ENCODE measurements at regions of chr12 and their contacts with region 1.

Region 1: DNA sequence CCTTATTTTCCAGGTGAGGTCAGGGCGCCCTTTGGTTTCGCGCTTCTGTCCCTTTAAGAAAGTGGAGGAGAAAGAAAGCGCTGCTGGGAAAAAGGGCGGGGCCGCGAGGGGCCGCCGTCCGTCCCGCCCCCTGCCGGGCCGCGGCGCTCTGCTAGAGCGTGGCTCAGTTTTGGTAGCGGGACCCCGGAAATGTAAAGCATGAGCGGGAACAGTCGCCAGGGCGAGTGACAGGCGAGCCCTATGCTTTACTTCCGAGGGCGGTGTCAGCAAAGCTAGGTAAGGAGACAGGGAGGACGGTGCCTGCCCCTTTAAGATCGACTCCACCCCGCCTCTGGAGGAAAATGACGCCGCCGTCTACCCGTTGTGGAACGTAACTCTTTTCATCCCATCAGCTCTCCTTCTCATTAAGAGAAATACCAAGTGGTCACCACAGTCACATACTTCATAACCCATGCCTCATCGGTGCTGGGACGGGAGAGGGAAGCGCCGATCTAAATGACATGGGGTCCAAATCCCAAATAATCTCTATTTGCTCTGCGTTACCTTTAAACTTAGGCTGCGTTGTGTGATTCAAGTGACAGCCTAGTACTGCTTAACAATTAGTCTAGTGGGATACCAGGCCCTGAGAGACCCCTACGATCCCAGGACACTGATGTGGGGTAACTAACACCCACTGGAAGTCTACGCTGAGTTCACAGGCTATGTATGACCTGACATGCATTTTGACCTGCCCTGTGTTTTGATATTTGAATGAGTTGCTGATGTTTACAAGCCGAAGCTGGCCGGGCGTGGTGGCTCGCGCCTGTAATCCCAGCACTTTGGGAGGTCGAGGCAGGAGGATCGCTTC is at the start of gene ETFBKMT:
- DNase-seq: peak; percentile 68 to 94 (median 90)
- H3K4me3 ChIP-seq: peak within 1 kb of the TSS; percentile 59 to 97 (median 81)
- H3K27ac ChIP-seq: peak within 1 kb of the TSS; percentile 84 to 99 (median 96)
- H3K27me3 ChIP-seq: no peaks in the 10 kb centered on the region
- CTCF ChIP-seq: peak; percentile 29 to 89 (median 72)
- total RNA-seq, gene ETFBKMT: 1.6 to 8.4 (median 4.6) TPM

Region 2: GRCh38 chr12:31325877-31326631 is 333.3 kb before region 1 on chr12 and contains the start of gene SINHCAF:
- intact Hi-C with region 1: loop called in 1 of 2 experiments (anchors 10 kb)
- DNase-seq: peak; percentile 95 to 99 (median 98)
- H3K4me3 ChIP-seq: peak within 1 kb of the TSS; percentile 34 to 89 (median 73)
- H3K27ac ChIP-seq: peak within 1 kb of the TSS in 53 of 59 donors; percentile 18 to 86 (median 68)
- H3K27me3 ChIP-seq: peaks cover 0 to 34% (median 9%) of the 10 kb centered on the region in 45 donors
- CTCF ChIP-seq: peak in 20 of 56 donors; percentile 9 to 56 (median 28)
- total RNA-seq, gene SINHCAF: 0.70 to 9.0 (median 3.2) TPM

Region 3: DNA sequence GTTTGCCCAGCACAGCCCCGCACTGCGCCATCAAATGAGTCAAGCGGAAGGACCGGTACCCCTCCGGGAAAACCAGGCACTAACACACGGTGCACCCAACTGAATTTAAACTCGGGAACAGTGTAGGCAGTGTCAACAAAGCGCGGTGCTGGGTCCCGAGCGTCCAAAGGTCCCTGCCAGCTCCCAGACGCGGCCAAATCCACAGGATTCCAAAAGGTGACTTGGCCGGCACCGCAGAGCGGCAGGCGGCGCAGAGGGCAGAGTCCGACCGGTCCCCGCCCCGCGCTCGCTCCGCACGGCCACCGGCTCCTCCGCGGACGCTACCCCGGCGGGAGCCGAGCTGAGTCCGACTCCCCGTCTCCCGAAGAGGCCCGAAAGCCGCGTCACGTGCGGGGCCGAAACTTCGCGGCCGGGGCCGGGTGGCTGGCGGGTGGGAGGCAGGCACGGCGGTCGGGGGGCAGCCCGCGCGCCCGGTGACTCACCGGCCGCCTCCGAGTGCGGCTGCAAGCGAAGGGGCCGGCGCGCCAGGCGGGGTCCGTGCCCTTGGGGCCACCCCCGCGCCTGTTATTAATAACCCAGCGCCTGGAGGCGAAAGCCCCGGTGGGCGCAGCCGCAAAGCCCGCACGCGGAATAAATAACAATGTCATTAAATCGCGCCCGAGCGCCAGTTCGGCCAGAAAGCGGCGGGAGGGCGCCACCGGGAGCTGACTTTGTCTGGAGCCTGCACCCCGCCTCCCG is 69.2 kb before region 1 on chr12:
- intact Hi-C with region 1: no loop called
- DNase-seq: peak; percentile 50 to 77 (median 65)
- H3K4me3 ChIP-seq: peak overlapping the region; percentile 63 to 96 (median 87)
- H3K27ac ChIP-seq: peak overlapping the region; percentile 85 to 98 (median 96)
- H3K27me3 ChIP-seq: no peaks in the 10 kb centered on the region
- CTCF ChIP-seq: peak in 21 of 56 donors; percentile 3 to 50 (median 16)

Region 4: GRCh38 chr12:31728917-31729640 is 69.8 kb after region 1 on chr12 and contains the start of gene AMN1:
- intact Hi-C with region 1: loop called (anchors 1 to 2 kb)
- DNase-seq: peak; percentile 98 to 99 (median 99)
- H3K4me3 ChIP-seq: peak within 1 kb of the TSS; percentile 65 to 97 (median 80)
- H3K27ac ChIP-seq: peak within 1 kb of the TSS; percentile 78 to 98 (median 93)
- H3K27me3 ChIP-seq: no peaks in the 10 kb centered on the region
- CTCF ChIP-seq: peak in 45 of 56 donors; percentile 6 to 60 (median 37)
- total RNA-seq, gene AMN1: 29.1 to 65.1 (median 46.0) TPM

Region 5: GRCh38 chr12:31773867-31774266 is 114.6 kb after region 1 on chr12:
- intact Hi-C with region 1: no loop called
- DNase-seq: no peak
- H3K4me3 ChIP-seq: no peak overlapping the region
- H3K27ac ChIP-seq: no peak overlapping the region
- H3K27me3 ChIP-seq: no peaks in the 10 kb centered on the region
- CTCF ChIP-seq: no peak

Region 6: DNA sequence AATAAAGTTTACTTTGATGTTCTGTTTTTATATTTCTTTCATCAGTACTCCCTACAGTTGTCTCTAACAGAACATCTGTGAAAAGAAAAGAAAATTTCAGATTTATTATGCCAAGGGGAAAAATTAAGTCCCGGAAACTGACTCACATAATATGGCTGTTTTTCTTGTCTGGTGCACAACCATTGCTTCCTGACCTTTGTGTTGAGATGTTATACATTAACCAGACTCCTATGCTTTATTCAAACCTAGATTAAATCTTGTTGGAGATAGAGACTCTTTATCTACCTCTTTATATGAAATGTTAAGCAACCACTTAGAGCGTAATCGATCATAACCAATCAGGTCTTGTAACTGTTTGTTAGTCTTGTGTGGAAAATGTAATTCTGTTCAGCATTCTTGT is 409.8 kb after region 1 on chr12:
- intact Hi-C with region 1: loop called in 1 of 2 experiments (anchors 10 kb)
- DNase-seq: no peak
- H3K4me3 ChIP-seq: no peak overlapping the region
- H3K27ac ChIP-seq: no peak overlapping the region
- H3K27me3 ChIP-seq: no peaks in the 10 kb centered on the region
- CTCF ChIP-seq: no peak

Measured in dorsolateral prefrontal cortex (tissue), 120 donors.